Naive thymus-derived CD4-positive, alpha-beta T cell (primary cell): ENCODE measurements at regions of chr4 and their contacts with region 1.

Region 1: GRCh38 chr4:80566203-80566872 is 230.8 kb downstream of the CFAP299 start:
- DNase-seq: no peak
- ATAC-seq: no peak
- H3K4me3 ChIP-seq: no peak overlapping the region
- H3K4me3 Mint-ChIP-seq: peak overlapping the region in 6 of 10 donors; percentile 18 to 65 (median 52)
- H3K27ac ChIP-seq: no peak overlapping the region
- H3K27ac Mint-ChIP-seq: peak overlapping the region in 2 of 9 donors; percentile 18 to 62
- H3K4me1 ChIP-seq: no peaks in the 10 kb centered on the region
- H3K4me1 Mint-ChIP-seq: peaks cover 0 to 20% (median 9%) of the 10 kb centered on the region in 7 donors
- H3K27me3 ChIP-seq: no peaks in the 10 kb centered on the region
- H3K27me3 Mint-ChIP-seq: no peaks in the 10 kb centered on the region

Region 2: DNA sequence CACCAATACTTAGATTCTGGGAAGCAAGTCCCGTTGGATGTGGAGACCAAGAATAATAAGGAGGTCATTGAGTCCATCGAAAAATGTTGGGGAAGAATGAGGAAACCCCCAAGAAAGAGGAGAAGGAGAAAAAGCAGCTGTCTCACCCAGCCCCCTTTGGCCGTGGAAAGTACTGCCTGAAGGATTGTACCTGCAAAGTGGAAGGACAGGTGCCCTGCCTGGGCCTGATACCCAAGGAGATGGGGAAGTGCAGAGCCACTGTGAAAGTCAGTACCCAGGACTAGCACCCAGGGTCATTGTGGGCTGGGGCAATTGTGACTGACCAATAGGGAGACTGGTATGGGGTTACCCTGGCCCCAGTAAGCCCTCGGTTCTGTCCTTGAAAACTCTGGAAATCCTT is 244.6 kb before region 1 on chr4:
- CTCF ChIA-PET with region 1: no interaction called
- POLR2A ChIA-PET with region 1: no interaction called
- intact Hi-C with region 1: no loop called
- DNase-seq: no peak
- ATAC-seq: no peak
- H3K4me3 ChIP-seq: no peak overlapping the region
- H3K4me3 Mint-ChIP-seq: no peak overlapping the region
- H3K27ac ChIP-seq: no peak overlapping the region
- H3K27ac Mint-ChIP-seq: no peak overlapping the region
- H3K4me1 ChIP-seq: no peaks in the 10 kb centered on the region
- H3K4me1 Mint-ChIP-seq: peaks cover 0 to 6% (median 5%) of the 10 kb centered on the region in 7 donors
- H3K27me3 ChIP-seq: no peaks in the 10 kb centered on the region
- H3K27me3 Mint-ChIP-seq: peaks cover 0 to 13% (median 7%) of the 10 kb centered on the region in 5 donors

Region 3: DNA sequence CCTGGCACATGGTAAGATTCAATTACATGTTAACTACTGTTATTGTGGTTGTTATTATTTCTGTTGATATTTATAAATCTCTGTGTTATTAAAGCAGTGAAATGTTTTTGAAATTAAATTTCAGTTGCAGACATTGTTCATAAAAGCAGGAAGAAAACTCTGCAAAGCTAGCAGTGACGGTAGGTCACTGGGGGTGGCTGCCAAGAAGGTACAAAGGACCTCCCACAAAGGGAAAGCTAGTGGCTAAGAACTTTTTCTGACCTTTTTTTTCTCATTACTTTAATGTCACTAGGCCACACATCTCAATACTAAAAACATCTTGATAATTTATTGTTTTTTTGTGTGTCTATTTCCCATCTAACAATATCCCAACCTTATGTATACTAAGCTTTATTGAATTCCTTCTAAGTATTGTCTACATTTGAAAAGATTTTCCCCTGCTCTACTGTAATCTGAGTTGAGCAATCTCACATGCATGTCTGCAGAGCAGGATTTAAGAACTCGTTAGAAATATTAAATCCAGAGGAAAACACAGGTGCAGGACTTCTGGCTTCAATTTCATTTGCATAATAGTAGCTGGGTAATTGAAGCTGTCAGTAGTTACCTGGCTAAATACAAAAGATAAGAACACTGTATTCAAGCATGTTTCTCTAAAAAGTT is 33.5 kb before region 1 on chr4:
- CTCF ChIA-PET with region 1: no interaction called
- POLR2A ChIA-PET with region 1: no interaction called
- intact Hi-C with region 1: loop called in 1 of 2 experiments (anchors 5 kb)
- DNase-seq: no peak
- ATAC-seq: no peak
- H3K4me3 ChIP-seq: no peak overlapping the region
- H3K4me3 Mint-ChIP-seq: no peak overlapping the region
- H3K27ac ChIP-seq: no peak overlapping the region
- H3K27ac Mint-ChIP-seq: no peak overlapping the region
- H3K4me1 ChIP-seq: no peaks in the 10 kb centered on the region
- H3K4me1 Mint-ChIP-seq: peaks cover 0 to 44% (median 31%) of the 10 kb centered on the region in 7 donors
- H3K27me3 ChIP-seq: no peaks in the 10 kb centered on the region
- H3K27me3 Mint-ChIP-seq: peaks cover 0 to 9% (median 0%) of the 10 kb centered on the region in 5 donors

Region 4: DNA sequence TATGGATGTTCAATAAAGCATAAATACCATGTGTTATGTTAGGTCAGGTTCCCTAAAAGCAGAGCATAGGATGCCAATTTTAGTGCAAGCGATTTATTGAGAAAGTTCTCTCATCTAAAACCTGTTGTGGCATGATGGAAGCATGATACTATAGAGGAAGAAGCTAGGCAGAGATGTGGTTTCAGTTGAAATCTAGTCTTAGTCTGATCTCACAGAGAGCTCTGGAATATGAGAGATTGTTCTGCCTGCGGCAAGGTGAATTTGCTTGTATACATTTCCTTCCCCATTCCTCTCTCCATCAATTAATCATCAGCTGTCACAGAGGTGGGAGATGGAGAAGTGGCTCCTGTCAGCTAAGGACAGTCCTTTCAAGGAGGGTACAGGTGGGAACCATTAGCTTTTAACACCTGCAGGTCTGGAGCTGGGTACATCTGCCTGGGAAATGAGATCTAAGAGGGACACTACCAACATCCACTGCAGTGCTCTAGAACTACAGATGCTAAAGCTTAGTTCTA is 21.6 kb after region 1 on chr4:
- CTCF ChIA-PET with region 1: no interaction called
- POLR2A ChIA-PET with region 1: no interaction called
- intact Hi-C with region 1: loop called in 1 of 2 experiments (anchors 2 kb)
- DNase-seq: no peak
- ATAC-seq: no peak
- H3K4me3 ChIP-seq: no peak overlapping the region
- H3K4me3 Mint-ChIP-seq: no peak overlapping the region
- H3K27ac ChIP-seq: no peak overlapping the region
- H3K27ac Mint-ChIP-seq: no peak overlapping the region
- H3K4me1 ChIP-seq: no peaks in the 10 kb centered on the region
- H3K4me1 Mint-ChIP-seq: peaks cover 0 to 10% (median 6%) of the 10 kb centered on the region in 7 donors
- H3K27me3 ChIP-seq: no peaks in the 10 kb centered on the region
- H3K27me3 Mint-ChIP-seq: no peaks in the 10 kb centered on the region

Region 5: DNA sequence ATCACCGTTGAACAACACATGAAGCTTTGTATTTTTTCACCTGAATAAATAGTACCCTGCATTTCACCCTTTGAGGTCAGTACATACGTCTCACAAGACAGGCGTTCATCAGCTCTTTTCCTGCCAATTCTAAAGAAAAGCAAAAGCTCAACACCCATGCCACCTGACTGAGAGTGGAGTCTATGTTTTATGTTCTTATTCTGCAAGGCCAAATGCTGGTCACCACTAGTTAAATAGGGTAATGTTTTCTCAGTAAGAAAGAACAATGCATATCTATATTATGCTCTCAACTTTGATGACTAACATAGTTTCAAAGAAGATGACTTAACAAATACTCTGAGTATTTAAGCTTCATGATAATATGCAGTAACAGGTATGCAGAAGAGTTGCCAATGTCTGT is 127.8 kb after region 1 on chr4:
- CTCF ChIA-PET with region 1: no interaction called
- POLR2A ChIA-PET with region 1: no interaction called
- intact Hi-C with region 1: no loop called
- DNase-seq: no peak
- ATAC-seq: no peak
- H3K4me3 ChIP-seq: no peak overlapping the region
- H3K4me3 Mint-ChIP-seq: no peak overlapping the region
- H3K27ac ChIP-seq: no peak overlapping the region
- H3K27ac Mint-ChIP-seq: no peak overlapping the region
- H3K4me1 ChIP-seq: no peaks in the 10 kb centered on the region
- H3K4me1 Mint-ChIP-seq: peaks cover 0 to 5% (median 0%) of the 10 kb centered on the region in 7 donors
- H3K27me3 ChIP-seq: no peaks in the 10 kb centered on the region
- H3K27me3 Mint-ChIP-seq: no peaks in the 10 kb centered on the region